ENCODE measurements at regions of chr6 and their contacts with region 1.

Region 1: DNA sequence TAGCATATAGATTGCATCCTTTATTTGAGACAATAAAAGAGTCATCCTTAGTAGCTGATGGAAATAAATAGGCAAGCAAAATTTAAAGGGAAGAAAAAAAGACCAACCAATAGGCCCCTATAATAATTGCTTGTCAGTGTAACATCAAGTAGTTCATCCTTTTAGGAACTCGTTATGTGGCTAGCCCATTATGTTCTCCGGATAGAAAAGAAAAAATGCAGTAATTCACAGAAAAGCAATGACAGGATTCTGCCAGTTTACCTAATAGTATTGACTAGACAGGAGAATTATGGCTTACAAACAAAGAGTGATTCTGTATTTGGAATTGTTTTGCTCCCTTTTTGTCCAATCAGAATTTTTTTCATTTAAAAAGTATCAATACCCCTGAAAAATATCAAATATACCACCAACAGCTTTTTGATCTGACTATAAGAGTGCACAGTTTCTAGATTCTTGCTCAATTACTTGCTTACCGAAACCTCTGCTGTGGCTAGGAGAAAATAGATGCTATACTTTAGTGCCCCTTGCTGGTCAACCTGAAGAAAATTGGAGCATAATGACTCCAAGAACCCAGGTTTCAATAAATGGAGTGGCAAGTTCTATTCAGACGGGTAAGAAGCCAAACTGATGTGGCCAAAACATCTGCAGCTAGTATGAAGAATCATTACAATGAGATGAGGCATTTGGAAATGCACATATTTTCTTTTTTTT is 91.5 kb upstream of the SASH1 start:
- DNase-seq: no peak
- H3K4me3 ChIP-seq: no peak overlapping the region
- H3K27ac ChIP-seq: no peak overlapping the region
- H3K4me1 ChIP-seq: no peaks in the 10 kb centered on the region
- H3K27me3 ChIP-seq: no peaks in the 10 kb centered on the region
- CTCF ChIP-seq: peak in 2 of 3 experiments; percentile 42 to 48; a peak in 3 of 4 replicates
- EP300 ChIP-seq: no peak
- POLR2A ChIP-seq: no peak
- RAD21 ChIP-seq: peak; percentile 68 to 79

Region 2: GRCh38 chr6:148240461-148240840 is 10.7 kb before region 1 on chr6:
- CTCF ChIA-PET with region 1: interaction called, 10 read pairs
- POLR2A ChIA-PET with region 1: no interaction called
- DNase-seq: no peak
- H3K4me3 ChIP-seq: no peak overlapping the region
- H3K27ac ChIP-seq: no peak overlapping the region
- H3K4me1 ChIP-seq: no peaks in the 10 kb centered on the region
- H3K27me3 ChIP-seq: no peaks in the 10 kb centered on the region
- CTCF ChIP-seq: no peak
- EP300 ChIP-seq: no peak
- POLR2A ChIP-seq: no peak
- RAD21 ChIP-seq: no peak

Region 3: DNA sequence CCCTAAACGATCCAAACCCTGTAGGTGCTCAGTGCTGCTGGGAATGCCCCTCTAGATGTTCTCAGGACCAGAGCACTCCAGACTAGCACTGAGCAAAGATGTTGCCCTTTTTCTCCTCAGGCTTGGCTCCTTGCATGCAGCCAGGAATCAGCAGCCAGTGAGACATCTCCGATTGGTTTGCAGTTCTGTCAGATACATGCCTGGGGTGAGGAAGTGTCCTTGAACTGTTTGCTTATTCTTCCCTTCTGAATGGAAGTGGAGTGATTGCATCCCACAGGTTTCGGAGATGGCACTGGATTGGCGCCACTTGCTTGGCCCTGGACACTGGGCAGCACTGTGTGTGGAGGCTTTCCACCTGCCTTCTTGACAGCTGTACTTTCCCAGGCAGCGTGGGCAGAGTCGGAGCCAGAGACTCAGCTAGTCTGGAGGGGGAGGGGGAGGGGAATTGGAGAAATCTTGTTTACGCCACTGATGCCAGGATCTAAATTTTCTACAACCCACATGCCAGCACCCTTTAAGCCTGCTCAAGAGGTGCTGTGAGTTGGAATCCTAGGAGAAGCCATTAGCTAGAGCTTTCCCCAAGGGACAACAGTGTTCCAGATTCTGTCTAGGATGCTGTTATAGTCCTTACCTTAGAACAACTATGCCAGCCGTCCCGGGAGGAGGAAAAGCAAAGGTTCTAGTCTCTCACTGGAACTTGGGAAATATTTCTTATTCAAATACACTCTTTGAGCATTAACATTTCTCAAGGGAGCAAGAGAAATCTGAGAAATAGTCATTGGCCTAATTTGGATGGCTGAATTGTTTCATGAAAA is 42.3 kb after region 1 on chr6:
- CTCF ChIA-PET with region 1: no interaction called
- POLR2A ChIA-PET with region 1: no interaction called
- DNase-seq: no peak
- H3K4me3 ChIP-seq: no peak overlapping the region
- H3K27ac ChIP-seq: no peak overlapping the region
- H3K4me1 ChIP-seq: no peaks in the 10 kb centered on the region; a peak in 1 of 7 replicates
- H3K27me3 ChIP-seq: no peaks in the 10 kb centered on the region
- CTCF ChIP-seq: no peak
- EP300 ChIP-seq: no peak
- POLR2A ChIP-seq: no peak
- RAD21 ChIP-seq: no peak

Region 4: DNA sequence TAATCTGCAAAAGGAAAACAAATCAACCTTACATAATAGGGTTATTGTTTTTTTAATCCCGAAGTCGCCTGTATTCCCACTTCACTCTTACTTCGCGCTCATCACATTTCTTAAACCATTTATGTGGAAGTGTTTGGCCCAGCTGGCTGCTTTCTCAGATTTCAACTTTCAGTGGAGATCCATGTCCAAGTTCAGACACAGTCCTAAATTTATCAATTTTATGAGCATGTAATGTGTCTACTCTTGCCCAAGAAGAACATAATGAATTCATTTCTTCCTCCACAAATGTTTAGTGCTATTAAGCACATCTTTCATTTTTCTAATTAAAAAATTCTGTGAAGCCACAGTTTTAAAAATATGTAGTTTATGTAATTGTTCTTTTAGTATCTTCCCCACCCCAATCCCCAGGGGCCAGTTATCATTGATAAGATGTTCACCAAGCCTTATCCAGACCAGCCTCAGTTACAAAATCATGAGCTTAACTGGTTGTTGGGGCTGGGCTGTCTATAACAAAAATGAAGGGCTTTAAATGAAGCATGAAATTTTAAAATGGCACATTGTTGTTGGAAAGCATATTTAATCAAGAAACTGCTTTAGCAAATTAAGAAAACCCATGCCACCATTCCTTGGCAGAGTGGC is 647.4 kb after region 1 on chr6:
- CTCF ChIA-PET with region 1: no interaction called
- POLR2A ChIA-PET with region 1: no interaction called
- DNase-seq: no peak
- H3K4me3 ChIP-seq: no peak overlapping the region
- H3K27ac ChIP-seq: no peak overlapping the region
- H3K4me1 ChIP-seq: no peaks in the 10 kb centered on the region
- H3K27me3 ChIP-seq: no peaks in the 10 kb centered on the region
- CTCF ChIP-seq: no peak
- EP300 ChIP-seq: no peak
- POLR2A ChIP-seq: no peak
- RAD21 ChIP-seq: no peak

Measured in H1 (cell line).